Activated naive CD8-positive, alpha-beta T cell treated with anti-CD3 and anti-CD28 coated beads, Interleukin-2, amount 10 ng/mL, durations not matched to agents 7 days and 5 days (primary cell): ENCODE measurements at regions of chr11 and their contacts with region 1.

Region 1: GRCh38 chr11:64846998-64847666 is 2.7 kb upstream of the CDC42BPG start:
- DNase-seq: peak; percentile 96
- ATAC-seq: peak; percentile 53
- H3K4me3 Mint-ChIP-seq: no peak overlapping the region
- H3K27ac Mint-ChIP-seq: peak overlapping the region; percentile 76
- H3K4me1 Mint-ChIP-seq: peaks cover 47% of the 10 kb centered on the region
- H3K27me3 Mint-ChIP-seq: no peaks in the 10 kb centered on the region

Region 2: DNA sequence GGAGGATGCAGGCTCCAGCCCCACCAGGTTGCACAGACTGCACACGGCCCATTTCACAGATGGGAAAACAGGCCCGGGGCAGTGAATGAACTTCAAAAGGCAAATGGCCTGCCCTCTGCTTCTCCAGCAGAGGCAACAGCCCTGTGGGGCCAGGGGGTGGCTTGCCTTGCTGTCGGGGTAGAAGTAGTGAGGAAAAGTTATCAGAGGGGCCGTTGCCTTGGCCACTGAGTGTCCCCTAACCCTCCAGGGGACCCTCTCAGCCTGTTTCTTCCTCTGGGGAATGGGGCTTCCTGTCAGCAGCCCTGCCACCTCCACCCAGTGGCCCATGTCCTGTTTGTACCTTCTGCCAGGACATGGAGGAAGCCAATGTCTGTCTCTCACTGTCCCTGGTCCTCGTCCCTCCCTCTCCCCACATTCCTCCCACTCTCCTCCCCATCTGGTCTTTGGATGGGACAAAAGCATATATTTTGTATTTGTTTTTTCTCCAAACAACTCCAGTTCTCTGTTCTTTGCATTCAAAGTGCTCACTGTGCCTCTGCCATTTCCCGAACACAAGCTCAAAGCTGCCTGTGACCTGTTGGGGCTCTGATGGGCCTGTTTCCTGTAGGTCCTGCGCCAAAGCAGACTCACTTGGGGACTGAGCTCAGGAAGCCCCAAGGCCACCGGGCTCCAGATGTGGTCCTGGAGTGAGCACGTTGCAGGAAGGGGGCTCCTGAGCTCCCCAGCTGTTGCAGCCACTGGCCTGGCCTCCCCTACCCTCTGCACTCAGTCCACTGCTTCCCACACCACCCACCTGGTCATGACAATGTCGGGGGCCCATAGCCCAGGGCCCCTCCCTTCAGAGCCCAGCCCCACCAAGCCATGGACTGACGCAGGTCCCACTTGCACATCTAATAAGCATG is 53.6 kb before region 1 on chr11:
- POLR2A ChIA-PET with region 1: no interaction called
- DNase-seq: no peak
- ATAC-seq: peak; percentile 62
- H3K4me3 Mint-ChIP-seq: peak overlapping the region; percentile 35
- H3K27ac Mint-ChIP-seq: peak overlapping the region; percentile 96
- H3K4me1 Mint-ChIP-seq: peaks cover 30% of the 10 kb centered on the region
- H3K27me3 Mint-ChIP-seq: no peaks in the 10 kb centered on the region

Region 3: DNA sequence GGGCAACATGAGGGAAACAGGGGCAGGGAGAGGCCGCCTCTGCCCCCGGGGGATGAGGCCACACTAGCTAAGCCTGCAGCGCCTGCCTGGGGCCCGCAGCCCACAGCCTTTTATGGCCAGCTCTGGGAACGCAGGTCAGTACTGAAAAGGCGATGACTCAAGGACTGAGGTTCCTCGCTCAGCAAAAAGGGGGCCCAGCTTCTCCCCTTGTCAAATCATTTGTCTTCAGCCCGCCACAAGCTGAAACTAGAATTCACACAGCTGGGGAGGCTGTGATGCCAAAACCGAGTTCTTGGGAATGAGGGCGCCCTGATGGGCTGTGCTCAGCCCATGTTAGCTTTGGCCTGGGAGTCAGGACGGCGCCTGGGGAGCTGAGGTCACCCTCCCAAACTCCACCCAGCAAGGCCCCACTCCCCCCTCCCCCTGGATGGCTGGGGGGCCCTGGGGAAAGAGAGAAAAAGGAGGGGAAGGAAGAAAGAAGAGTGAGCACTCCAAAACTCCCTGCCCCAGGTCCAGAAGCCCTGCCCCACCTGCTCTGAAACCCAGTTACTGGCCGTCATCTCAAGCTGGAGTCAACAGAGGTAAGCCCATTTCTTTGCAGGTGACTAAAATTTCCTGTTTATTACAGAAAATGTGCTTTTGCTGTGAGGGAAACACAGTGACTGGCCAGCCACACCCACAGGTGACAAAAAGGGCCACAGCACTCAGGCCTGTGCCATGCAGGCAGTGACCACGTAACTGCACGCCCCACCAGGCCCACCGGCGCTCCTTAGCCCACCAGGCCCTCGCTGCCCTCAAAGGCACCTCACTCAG is 17.5 kb after region 1 on chr11:
- POLR2A ChIA-PET with region 1: interaction called, 142 read pairs
- DNase-seq: peak; percentile 50
- ATAC-seq: peak; percentile 8
- H3K4me3 Mint-ChIP-seq: peak overlapping the region; percentile 74
- H3K27ac Mint-ChIP-seq: peak overlapping the region; percentile 95
- H3K4me1 Mint-ChIP-seq: peaks cover 72% of the 10 kb centered on the region
- H3K27me3 Mint-ChIP-seq: no peaks in the 10 kb centered on the region

Region 4: DNA sequence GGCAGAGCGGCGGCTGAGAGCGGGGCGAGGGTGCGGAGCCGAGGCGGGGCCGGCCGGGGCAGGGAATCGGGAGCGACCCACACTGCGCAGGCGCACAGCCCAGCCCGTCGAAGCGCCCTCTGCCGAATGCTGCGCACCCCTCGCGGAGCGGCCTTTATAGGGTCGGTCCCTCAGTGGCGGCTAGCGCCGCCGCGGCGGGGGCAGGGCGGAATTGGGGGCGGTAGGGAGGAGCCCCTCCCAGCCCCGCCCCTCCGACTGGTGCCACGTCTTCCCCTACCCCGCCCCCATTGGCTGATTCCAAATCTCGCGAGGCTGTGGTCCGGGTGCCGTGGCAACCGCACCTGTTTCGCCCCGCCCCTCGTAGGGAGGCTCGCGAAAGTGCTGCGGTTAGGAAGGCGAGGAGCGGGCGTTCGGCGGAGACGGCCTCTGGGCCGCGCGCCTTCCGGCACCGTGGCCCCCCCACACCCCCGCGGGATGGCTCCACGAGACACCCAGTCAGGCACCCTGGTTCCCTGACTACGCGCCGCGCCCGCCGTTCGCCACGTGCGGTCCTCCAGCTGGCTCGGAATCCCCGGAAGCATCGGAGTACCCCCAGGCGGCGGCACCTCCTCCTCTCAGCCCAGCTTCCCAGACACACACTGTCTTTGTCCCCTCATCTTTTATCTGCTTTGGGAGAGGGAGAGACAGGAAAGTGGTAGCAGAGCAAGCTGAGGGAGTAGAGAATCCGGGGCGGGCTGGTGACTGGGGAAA is 31.5 kb after region 1 on chr11 and contains the start of gene EHD1:
- POLR2A ChIA-PET with region 1: interaction called, 782 read pairs
- DNase-seq: peak; percentile 98
- ATAC-seq: peak; percentile 81
- H3K4me3 Mint-ChIP-seq: peak within 1 kb of the TSS; percentile 100
- H3K27ac Mint-ChIP-seq: peak within 1 kb of the TSS; percentile 96
- H3K4me1 Mint-ChIP-seq: peaks cover 56% of the 10 kb centered on the region
- H3K27me3 Mint-ChIP-seq: no peaks in the 10 kb centered on the region
- total RNA-seq, gene EHD1: 187 to 195 TPM